Sigmoid colon (tissue), 7 donors: ENCODE measurements at regions of chr17 and their contacts with region 1.

Region 1: GRCh38 chr17:9284884-9285283 is 263.6 kb downstream of the NTN1 start:
- DNase-seq: no peak
- H3K4me3 ChIP-seq: no peak overlapping the region
- H3K27ac ChIP-seq: peak overlapping the region in 2 of 4 donors; percentile 35 to 42
- H3K4me1 ChIP-seq: peaks cover 0 to 33% (median 8%) of the 10 kb centered on the region in 4 donors
- H3K27me3 ChIP-seq: no peaks in the 10 kb centered on the region
- CTCF ChIP-seq: no peak
- EP300 ChIP-seq: no peak
- POLR2A ChIP-seq: no peak

Region 2: GRCh38 chr17:8875957-8876356 is 408.9 kb before region 1 on chr17:
- intact Hi-C with region 1: no loop called
- DNase-seq: no peak
- H3K4me3 ChIP-seq: no peak overlapping the region
- H3K27ac ChIP-seq: no peak overlapping the region
- H3K4me1 ChIP-seq: no peaks in the 10 kb centered on the region
- H3K27me3 ChIP-seq: peaks cover 0 to 30% (median 12%) of the 10 kb centered on the region in 3 donors
- CTCF ChIP-seq: no peak
- EP300 ChIP-seq: no peak
- POLR2A ChIP-seq: no peak

Region 3: DNA sequence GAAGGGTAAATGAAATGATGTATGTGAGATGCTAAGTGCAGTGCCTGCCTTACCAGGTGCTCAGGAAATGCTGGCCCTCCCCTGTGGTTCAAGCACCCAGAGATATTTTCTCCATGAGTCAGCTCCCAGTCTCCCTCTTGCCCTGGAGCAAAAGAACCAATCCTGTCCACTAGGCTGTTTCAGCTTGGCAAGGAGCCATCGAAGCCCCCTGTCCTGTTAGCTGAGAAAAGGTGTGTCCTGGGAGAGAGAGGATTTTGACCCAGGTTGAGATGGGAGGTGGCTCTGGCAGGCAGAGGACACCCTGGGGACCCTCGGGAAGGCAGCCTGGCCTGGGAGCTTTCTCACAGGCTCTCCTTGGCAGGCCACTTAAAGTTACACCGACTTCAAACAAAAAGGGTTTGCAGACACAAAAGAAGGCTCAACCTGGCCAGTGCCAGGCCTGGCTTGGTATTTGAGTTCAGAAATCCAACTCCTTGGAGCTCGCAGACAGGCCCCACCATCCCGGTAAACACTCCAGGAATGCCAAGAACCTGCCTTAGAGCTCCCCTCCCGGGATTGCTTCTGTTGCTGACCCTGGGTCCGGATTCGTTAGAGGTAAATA is 234.0 kb before region 1 on chr17:
- intact Hi-C with region 1: no loop called
- DNase-seq: no peak
- H3K4me3 ChIP-seq: no peak overlapping the region
- H3K27ac ChIP-seq: peak overlapping the region in 2 of 4 donors; percentile 26 to 70
- H3K4me1 ChIP-seq: peaks cover 0 to 7% (median 0%) of the 10 kb centered on the region in 4 donors
- H3K27me3 ChIP-seq: no peaks in the 10 kb centered on the region
- CTCF ChIP-seq: no peak
- EP300 ChIP-seq: no peak
- POLR2A ChIP-seq: no peak

Region 4: DNA sequence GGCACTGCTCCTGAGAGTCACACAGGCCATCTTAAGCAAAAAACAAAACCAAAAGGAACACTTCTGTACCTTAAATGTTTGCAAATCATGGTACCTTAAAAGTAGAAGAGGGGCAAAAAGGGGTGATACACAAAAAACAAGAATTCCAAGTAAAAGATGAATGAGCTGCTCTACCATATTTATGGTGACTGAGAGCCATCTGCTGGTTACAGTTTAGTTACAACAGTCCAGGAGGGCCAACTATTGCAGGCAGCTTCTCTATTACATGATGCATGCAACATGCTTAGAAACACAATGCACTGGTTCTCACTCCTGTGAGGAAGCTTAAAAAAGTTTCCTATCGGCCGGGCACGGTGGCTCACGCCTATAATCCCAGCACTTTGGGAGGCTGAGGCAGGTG is 237.2 kb after region 1 on chr17:
- intact Hi-C with region 1: loop called (anchors 10 kb)
- DNase-seq: no peak
- H3K4me3 ChIP-seq: no peak overlapping the region
- H3K27ac ChIP-seq: no peak overlapping the region
- H3K4me1 ChIP-seq: peaks cover 0 to 12% (median 6%) of the 10 kb centered on the region in 4 donors
- H3K27me3 ChIP-seq: no peaks in the 10 kb centered on the region
- CTCF ChIP-seq: peak; percentile 15 to 46 (median 38)
- EP300 ChIP-seq: no peak
- POLR2A ChIP-seq: no peak